AG04449 (cell line): ENCODE measurements at regions of chr15 and their contacts with region 1.

Region 1: DNA sequence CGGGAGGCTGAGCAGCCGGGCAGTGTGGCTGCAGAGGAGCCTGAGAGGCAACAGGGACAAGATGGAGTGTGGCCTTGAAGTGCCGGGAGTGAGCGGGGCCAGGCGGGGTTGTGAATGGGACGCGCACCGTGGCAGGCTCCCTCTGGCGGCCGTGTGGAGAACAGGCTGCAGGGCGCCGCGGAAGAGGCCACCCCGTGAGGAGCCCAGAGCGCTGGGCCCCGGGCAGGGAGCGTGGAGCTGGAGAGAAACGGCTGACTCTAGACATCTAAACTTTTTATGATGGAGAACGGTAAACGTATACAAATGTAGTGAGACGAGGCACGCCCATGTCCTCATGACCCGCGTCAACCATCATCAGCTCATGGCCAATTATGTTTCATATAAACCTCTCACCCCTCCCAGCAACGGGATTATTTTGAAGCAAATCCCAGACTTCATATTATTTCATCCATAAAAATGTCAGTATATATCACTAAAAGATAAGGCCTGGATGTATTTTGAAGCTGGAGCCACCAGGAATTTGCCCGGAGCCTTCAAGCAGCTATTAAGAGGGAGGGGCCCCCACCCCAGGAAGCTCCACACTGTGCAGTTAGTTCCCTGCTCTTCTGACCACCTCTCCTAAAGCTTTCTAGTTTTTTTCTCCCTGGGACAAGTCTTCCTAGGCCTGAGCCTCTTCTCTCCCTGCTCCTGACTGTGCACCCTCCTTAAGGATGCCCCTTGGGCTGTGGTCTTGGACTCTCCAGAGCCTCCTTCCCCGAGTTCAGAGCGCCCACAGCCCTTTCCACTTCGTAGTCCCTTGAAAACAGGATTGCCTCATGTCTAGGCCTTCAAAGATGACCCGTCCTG is 149.4 kb downstream of the SMAD6 start:
- DNase-seq: no peak
- H3K4me3 ChIP-seq: no peak overlapping the region
- CTCF ChIP-seq: peak; percentile 98

Region 2: DNA sequence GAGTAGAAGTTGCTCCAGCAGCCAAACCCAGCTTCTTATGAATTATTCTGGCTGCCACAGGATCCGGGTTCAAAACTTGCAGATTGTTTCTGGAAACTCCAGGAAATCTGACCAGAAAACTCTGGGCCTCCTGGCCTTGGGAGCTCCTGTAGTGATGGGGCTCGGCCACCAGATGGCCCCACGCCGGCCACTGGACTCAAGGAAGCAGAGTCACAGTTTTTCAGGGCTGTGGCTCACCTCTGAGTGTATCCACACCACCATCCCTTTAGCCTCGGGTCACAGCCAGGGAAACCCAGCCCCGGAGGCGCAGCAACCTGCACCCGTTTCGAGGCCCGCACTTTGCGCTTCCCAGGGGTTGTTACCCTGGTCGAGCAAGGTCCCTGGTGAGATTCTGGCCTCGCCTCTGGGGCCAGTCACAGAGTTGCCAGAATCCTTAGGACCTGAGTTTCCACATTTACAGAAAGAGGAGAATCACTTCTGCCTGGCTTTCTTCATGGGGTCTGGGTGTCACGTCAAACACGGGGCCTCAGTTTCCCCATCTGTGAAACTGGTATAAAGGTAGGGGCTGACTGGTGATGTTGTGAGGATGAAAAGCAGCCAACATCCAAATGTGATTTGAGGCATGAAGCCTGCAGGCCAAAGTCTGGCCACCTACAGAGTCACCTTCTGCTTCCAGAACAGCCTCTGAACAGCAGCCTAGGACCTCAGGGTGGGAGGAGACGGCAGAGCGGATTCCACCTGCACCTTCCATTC is 232.1 kb before region 1 on chr15:
- CTCF ChIA-PET with region 1: interaction called, 159 read pairs
- POLR2A ChIA-PET with region 1: no interaction called
- DNase-seq: no peak
- H3K4me3 ChIP-seq: no peak overlapping the region
- CTCF ChIP-seq: peak; percentile 93

Region 3: GRCh38 chr15:66720206-66721006 is 131.0 kb before region 1 on chr15:
- CTCF ChIA-PET with region 1: interaction called, 234 read pairs
- POLR2A ChIA-PET with region 1: no interaction called
- DNase-seq: no peak
- H3K4me3 ChIP-seq: no peak overlapping the region
- CTCF ChIP-seq: no peak

Region 4: GRCh38 chr15:66780172-66780972 is 71.1 kb before region 1 on chr15:
- CTCF ChIA-PET with region 1: interaction called, 192 read pairs
- POLR2A ChIA-PET with region 1: no interaction called
- DNase-seq: no peak
- H3K4me3 ChIP-seq: no peak overlapping the region
- CTCF ChIP-seq: no peak

Region 5: DNA sequence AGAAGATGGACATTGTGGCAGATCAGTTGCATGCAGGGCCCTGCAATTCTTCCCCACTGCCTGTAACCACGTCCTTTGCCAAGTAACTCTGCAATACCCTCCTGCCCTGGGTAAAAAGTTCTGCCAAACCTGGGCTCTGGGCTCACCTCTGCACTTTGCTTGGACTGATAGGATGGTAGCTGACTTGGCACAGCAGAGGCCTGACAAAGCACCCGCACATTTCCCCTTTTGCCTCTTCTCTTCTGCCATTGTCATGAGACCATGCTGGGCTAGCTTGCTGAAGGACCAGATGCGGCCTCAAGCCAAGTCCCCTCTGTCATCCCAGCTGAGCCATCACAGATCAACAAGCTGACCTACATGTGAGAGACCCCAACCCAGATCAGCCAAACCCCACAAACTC is 27.0 kb before region 1 on chr15:
- CTCF ChIA-PET with region 1: interaction called, 15 read pairs
- POLR2A ChIA-PET with region 1: no interaction called
- DNase-seq: no peak
- H3K4me3 ChIP-seq: no peak overlapping the region
- CTCF ChIP-seq: no peak

Region 6: GRCh38 chr15:66868918-66869317 is 17.5 kb after region 1 on chr15:
- CTCF ChIA-PET with region 1: interaction called, 32 read pairs
- POLR2A ChIA-PET with region 1: no interaction called
- DNase-seq: no peak
- H3K4me3 ChIP-seq: no peak overlapping the region
- CTCF ChIP-seq: no peak

Region 7: DNA sequence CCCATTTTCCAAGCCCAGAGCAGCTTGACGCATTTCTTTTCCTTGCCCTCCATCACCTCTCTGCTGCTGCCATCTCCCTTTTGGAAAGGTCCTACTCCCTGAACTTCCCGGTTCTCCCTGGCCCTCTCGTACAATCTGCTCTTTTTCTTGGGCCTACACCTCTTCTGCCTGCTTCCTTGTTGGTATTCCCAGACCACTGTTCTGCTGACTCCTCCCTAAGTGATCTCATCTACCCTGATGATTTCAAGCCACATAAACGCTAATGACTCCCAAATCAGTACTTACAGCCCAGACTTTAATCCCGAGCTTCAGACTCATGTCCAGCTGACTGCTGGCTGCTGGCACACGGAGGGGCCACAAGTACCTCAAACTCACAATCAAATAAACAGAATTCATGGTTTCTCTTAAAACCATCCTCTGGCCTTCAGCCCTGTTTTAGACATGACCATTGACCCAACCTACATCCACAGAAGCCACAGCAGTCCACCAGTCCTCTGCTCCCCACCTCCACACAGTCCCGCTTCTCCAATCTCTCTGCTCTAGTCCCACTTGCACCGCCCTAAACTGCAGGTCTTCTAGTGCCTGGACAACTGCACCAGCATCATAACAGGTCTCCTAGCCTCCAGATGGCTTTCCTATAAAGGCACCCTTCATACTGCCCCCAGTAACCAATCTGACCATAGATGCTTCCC is 345.4 kb after region 1 on chr15:
- CTCF ChIA-PET with region 1: no interaction called
- POLR2A ChIA-PET with region 1: no interaction called
- DNase-seq: peak; percentile 80
- H3K4me3 ChIP-seq: no peak overlapping the region
- CTCF ChIP-seq: no peak